ENCODE measurements at regions of chr4 and their contacts with region 1.

Region 1: GRCh38 chr4:15882675-15883086 is 55.9 kb downstream of the FGFBP1 start:
- H3K4me3 ChIP-seq: no peak overlapping the region
- H3K27ac ChIP-seq: no peak overlapping the region
- H3K4me1 ChIP-seq: no peaks in the 10 kb centered on the region
- CTCF ChIP-seq: 0 out of 2 replicates have a peak, but pooled peaks have one; percentile 51

Region 2: DNA sequence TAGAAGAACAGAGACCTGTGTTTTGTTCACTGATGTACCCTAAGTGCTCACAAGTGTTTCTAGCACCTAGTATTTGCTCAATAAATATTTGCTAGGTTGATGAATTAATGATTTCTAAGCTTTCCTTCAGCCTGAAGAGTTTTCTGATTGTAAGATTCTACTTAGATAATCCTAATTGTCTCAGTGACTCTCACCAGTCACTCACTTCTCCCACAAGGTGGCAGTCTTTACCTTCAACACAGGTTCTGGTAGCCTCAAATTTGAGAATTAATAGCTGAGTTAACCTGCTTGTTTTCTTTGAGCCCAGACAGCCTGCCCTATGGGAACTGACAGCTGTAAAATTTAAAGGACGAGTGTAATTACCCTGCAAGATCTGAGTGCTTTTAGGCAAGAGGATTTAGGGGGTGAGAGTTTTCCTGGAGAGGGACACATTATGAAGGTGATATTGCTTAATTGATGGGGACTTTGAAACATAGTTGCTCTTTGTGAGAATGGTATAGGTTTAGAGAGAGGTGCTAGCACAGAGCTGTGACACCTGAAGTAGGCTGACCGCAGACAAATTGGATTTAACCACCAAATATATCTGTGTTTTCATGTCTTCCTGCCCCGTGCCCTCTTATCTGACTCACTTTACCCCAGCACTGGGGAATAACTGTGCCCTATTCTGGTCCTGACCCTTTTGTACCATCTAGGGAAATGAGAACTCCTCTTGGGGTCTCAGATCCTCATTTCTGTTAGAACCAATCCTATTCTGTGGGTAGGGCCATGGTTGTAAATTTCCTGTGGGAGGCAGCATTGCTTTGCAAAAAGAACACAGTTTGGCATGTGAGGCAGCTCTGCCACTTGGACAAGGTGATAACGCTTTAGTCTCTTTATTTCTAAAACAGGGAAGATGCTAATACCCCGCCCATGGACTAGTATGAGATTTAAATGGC is 76.8 kb before region 1 on chr4:
- CTCF ChIA-PET with region 1: interaction called, 41 read pairs
- POLR2A ChIA-PET with region 1: no interaction called
- H3K4me3 ChIP-seq: no peak overlapping the region
- H3K27ac ChIP-seq: no peak overlapping the region
- H3K4me1 ChIP-seq: no peaks in the 10 kb centered on the region
- CTCF ChIP-seq: peak; percentile 30; the same call in 1 of the 2 replicates

Region 3: DNA sequence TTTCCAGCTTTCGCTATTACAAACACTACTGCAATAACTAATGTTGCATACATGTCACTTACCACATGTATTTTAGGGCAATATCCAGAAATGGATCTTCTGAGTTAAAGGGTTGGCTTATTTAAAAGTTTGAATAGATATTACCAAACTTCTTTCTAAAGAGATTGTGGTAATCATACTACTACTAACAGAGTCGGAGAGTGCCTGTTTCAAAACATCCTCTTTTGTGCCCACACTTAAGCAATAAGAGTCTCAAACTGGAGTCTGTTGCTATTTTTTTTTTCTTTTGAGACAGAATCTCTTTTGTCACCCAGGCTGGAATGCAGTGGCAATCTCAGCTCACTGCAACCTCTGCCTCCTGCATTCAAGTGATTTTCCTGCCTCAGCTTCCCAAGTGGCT is 20.1 kb after region 1 on chr4:
- CTCF ChIA-PET with region 1: interaction called, 13 read pairs
- POLR2A ChIA-PET with region 1: no interaction called
- H3K4me3 ChIP-seq: no peak overlapping the region
- H3K27ac ChIP-seq: no peak overlapping the region
- H3K4me1 ChIP-seq: no peaks in the 10 kb centered on the region
- CTCF ChIP-seq: no peak

Region 4: DNA sequence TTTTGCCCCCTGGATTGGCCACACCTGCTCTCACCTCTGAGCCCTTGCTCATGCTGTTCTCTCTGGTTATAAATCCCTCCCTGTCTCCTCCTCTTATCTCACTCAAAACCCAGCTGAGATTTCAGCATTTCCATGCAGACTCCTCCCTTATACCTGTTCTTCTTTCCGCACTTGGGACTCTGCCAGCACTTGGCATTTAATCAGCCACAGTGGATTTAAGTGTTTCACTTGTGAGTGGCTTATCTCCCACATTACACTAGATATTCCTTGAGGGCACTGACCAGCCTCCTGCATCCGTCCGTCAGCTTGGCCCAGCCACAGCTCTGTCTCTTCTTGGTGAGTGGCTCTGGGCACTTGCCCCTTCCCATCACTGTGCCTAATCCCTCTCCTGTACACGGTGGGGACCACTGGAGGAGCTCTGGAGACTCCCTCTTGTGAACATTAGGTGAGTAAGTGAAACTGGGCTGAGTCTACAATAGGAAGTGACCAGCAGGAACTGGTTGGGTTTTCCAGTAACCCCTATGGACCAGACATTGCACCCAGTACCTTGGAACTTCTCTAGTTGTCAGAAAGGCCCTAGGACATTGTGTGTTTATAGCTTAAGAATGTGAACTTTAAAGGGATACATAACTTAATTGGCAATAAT is 35.9 kb after region 1 on chr4:
- CTCF ChIA-PET with region 1: interaction called, 12 read pairs
- POLR2A ChIA-PET with region 1: no interaction called
- H3K4me3 ChIP-seq: no peak overlapping the region
- H3K27ac ChIP-seq: no peak overlapping the region
- H3K4me1 ChIP-seq: no peaks in the 10 kb centered on the region
- CTCF ChIP-seq: no peak

Region 5: GRCh38 chr4:16001484-16001858 is 118.8 kb after region 1 on chr4:
- CTCF ChIA-PET with region 1: interaction called, 24 read pairs
- POLR2A ChIA-PET with region 1: no interaction called
- H3K4me3 ChIP-seq: no peak overlapping the region
- H3K27ac ChIP-seq: no peak overlapping the region
- H3K4me1 ChIP-seq: no peaks in the 10 kb centered on the region
- CTCF ChIP-seq: peak; percentile 83

Region 6: GRCh38 chr4:16264798-16265197 is 382.1 kb after region 1 on chr4:
- CTCF ChIA-PET with region 1: interaction called, 16 read pairs
- POLR2A ChIA-PET with region 1: no interaction called
- H3K4me3 ChIP-seq: no peak overlapping the region
- H3K27ac ChIP-seq: no peak overlapping the region
- H3K4me1 ChIP-seq: no peaks in the 10 kb centered on the region
- CTCF ChIP-seq: no peak

Measured in HEK293 (cell line).